HEK293 (cell line): ENCODE measurements at regions of chr7 and their contacts with region 1.

Region 1: DNA sequence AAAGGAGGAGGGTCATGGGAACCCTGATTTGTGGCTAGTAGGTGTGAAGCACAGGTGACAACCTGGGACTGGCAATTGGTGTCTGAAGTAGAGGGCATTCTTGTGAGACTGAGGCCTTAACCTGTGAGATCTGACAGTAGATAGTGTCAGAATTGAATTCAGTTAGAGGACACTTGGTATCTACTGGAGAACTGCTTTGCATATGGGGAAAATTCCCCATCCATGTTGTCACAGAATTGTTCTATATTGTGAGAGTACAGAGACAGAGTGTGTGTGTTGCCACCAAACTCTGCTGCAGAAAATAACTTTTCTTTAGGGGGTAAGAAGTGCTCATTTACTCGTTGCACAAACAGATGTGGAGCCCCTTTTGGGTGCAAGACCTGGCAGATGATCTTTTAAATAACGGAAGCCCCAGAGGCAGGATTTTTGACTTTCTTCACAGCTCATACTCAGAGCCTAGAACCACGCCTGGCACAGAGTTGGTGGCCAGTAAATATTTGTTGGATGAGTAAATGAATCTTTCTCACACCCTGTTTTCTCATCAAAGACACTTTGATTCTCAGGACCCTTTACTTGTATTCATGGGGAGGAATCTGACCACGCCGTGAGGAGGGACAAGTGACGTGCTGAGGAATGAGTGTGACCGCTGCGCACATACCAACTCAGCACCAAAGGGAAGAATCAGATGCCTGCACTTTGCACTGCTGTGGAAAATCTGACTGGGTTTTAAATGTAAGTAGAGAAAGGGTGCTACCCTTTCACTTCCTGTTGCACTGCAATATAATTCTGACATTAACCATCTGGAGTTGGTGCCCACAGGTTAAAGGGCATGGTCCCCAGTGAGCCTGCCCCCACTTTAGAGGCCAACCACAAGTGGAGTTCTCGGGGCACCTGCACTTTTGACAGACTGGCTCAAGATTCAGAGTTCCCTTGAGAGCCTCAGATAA is 39.2 kb upstream of the SDHAF3 start:
- H3K4me3 ChIP-seq: no peak overlapping the region
- H3K27ac ChIP-seq: no peak overlapping the region
- H3K4me1 ChIP-seq: no peaks in the 10 kb centered on the region
- CTCF ChIP-seq: no peak

Region 2: DNA sequence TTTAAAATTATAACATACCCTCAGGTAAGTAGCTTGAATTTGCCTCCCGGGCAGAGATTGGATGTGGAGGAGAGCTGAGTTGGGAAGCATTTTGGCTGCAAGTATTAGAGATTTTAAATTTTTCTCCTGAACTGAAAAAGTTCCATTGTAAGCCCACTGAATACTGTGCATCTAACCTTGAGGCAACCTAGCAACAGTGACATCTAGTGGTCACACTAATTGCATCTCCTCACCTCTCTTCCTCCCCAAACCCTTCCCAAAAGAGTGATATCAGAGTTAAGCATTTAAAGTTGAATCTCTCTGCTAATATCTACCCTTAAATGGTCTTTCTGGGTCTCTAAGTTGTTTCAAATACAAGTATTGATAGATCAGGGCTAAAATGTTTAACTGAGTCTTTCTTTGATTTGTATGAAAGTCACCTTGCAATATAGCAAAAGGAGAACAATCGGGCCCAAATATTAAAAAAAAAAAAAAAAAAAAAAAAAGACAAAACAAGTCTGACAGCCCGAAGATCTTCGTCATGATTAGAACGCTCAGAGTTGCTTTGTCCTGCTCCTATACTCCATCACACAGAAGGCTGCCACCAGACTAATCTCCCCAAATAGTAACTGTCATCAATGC is 13.2 kb before region 1 on chr7:
- CTCF ChIA-PET with region 1: interaction called, 10 read pairs
- POLR2A ChIA-PET with region 1: no interaction called
- H3K4me3 ChIP-seq: no peak overlapping the region
- H3K27ac ChIP-seq: no peak overlapping the region
- H3K4me1 ChIP-seq: no peaks in the 10 kb centered on the region
- CTCF ChIP-seq: no peak